Activated CD4-positive, alpha-beta T cell treated with anti-CD3 and anti-CD28 coated beads for 36 hours (primary cell): ENCODE measurements at regions of chr1 and their contacts with region 1.

Region 1: DNA sequence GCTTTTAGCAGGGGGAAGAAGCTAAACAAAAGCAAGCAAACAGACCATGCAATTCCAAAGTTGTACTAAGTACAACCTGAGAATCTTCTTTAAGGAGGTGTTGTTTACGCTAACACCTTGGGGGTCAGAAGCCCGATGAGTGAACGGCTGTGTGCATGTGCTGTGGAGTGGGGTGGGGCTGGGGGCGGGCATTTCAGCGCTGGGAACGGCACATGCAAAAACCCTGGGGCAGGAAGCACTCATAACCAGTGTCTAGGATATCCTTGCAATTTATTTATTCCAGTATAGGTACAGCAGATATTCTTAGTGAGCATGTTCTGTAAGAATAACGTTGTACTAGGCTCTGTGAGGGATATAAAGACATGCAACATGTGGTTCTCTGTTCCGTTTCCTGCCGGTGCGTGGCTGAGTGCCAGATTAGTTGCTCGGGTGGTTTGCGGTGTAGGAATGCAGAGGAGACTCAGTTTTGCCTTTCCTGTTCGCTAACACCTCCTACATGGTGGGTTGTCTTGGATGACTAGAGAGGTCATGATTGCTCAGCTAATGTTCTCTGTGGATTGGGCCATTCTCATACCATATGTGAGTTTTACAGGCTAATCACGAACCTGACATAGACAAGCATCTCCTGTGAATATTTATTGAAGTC is 3.7 kb downstream of the FASLG start:
- DNase-seq: peak; percentile 95
- ATAC-seq: peak; percentile 82
- H3K4me3 Mint-ChIP-seq: peak overlapping the region; percentile 78
- H3K27ac Mint-ChIP-seq: peak overlapping the region; percentile 57
- H3K4me1 Mint-ChIP-seq: peaks cover 74% of the 10 kb centered on the region
- H3K27me3 Mint-ChIP-seq: peaks cover 17% of the 10 kb centered on the region

Region 2: GRCh38 chr1:172357753-172358385 is 304.7 kb before region 1 on chr1:
- CTCF ChIA-PET with region 1: no interaction called
- POLR2A ChIA-PET with region 1: no interaction called
- intact Hi-C with region 1: loop called in 1 of 2 experiments (anchors 2 kb)
- DNase-seq: no peak
- ATAC-seq: peak; percentile 6
- H3K4me3 Mint-ChIP-seq: peak overlapping the region; percentile 39
- H3K27ac Mint-ChIP-seq: peak overlapping the region; percentile 34
- H3K4me1 Mint-ChIP-seq: peaks cover 62% of the 10 kb centered on the region
- H3K27me3 Mint-ChIP-seq: peaks cover 2% of the 10 kb centered on the region

Region 3: GRCh38 chr1:172627702-172628101 is 34.9 kb before region 1 on chr1:
- CTCF ChIA-PET with region 1: no interaction called
- POLR2A ChIA-PET with region 1: no interaction called
- intact Hi-C with region 1: loop called in 1 of 2 experiments (anchors 5 kb)
- DNase-seq: no peak
- ATAC-seq: peak; percentile 58
- H3K4me3 Mint-ChIP-seq: no peak overlapping the region
- H3K27ac Mint-ChIP-seq: no peak overlapping the region
- H3K4me1 Mint-ChIP-seq: peaks cover 41% of the 10 kb centered on the region
- H3K27me3 Mint-ChIP-seq: peaks cover 10% of the 10 kb centered on the region

Region 4: GRCh38 chr1:172708452-172708851 is 45.9 kb after region 1 on chr1:
- CTCF ChIA-PET with region 1: interaction called, 3 read pairs
- POLR2A ChIA-PET with region 1: interaction called, 3 read pairs
- intact Hi-C with region 1: loop called (anchors 1 kb)
- DNase-seq: peak; percentile 56
- ATAC-seq: peak; percentile 86
- H3K4me3 Mint-ChIP-seq: peak overlapping the region; percentile 37
- H3K27ac Mint-ChIP-seq: peak overlapping the region; percentile 47
- H3K4me1 Mint-ChIP-seq: peaks cover 13% of the 10 kb centered on the region
- H3K27me3 Mint-ChIP-seq: peaks cover 16% of the 10 kb centered on the region

Region 5: GRCh38 chr1:172727956-172728603 is 65.5 kb after region 1 on chr1:
- CTCF ChIA-PET with region 1: interaction called, 16 read pairs
- POLR2A ChIA-PET with region 1: no interaction called
- intact Hi-C with region 1: no loop called
- DNase-seq: peak; percentile 71
- ATAC-seq: peak; percentile 96
- H3K4me3 Mint-ChIP-seq: no peak overlapping the region
- H3K27ac Mint-ChIP-seq: no peak overlapping the region
- H3K4me1 Mint-ChIP-seq: peaks cover 18% of the 10 kb centered on the region
- H3K27me3 Mint-ChIP-seq: no peaks in the 10 kb centered on the region

Region 6: DNA sequence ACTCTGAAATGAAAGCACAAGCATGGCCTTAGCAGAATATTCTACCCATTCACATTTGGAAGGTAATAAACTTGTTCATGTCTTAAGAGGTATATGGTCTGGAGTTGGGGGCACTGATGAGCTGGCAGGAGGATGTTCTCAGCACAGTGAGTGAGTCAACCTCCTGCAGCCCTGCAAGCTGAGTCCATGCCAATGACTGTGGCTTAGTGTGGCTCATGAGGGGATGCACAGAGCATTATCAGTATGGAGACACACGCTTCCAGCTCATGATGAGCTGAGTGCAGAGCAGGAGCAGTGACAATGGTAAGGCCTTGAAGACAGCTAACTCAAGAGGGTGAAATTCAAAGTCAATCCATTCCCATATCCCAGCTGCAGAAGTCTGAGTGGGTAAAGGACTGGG is 285.9 kb after region 1 on chr1:
- CTCF ChIA-PET with region 1: no interaction called
- POLR2A ChIA-PET with region 1: no interaction called
- intact Hi-C with region 1: no loop called
- DNase-seq: peak; percentile 34
- ATAC-seq: peak; percentile 85
- H3K4me3 Mint-ChIP-seq: no peak overlapping the region
- H3K27ac Mint-ChIP-seq: no peak overlapping the region
- H3K4me1 Mint-ChIP-seq: peaks cover 17% of the 10 kb centered on the region
- H3K27me3 Mint-ChIP-seq: peaks cover 12% of the 10 kb centered on the region